Dendritic cell treated with granulocyte-macrophage colony-stimulating factor and Interleukin-4, amounts not matched to agents 40 ng/mL and 50 ng/mL, for 4 days (primary cell): ENCODE measurements at regions of chr19 and their contacts with region 1.

Region 1: DNA sequence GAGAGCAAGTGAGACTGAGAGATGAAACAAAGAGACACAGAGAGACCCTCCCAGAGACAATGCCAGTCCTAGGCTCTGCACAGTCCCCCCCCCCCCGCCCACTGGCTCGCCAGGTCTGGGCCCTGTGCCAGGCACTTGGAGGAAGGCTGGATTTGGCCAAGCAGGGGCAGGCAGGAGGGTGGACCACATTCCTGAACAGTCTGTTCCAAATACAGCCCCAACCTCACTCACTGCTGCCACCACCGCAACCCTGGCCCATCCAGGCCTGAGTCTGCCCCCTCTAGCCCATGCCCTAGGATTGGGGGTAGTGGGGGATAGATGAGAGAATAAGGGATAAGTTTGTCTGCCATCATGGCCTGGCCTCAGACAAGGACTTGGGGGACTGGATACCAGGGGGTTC is 19.0 kb downstream of the CYP2F1 start:
- H3K4me3 Mint-ChIP-seq: no peak overlapping the region
- H3K27ac Mint-ChIP-seq: no peak overlapping the region
- H3K4me1 Mint-ChIP-seq: peaks cover 17% of the 10 kb centered on the region
- H3K27me3 Mint-ChIP-seq: peaks cover 51% of the 10 kb centered on the region

Region 2: DNA sequence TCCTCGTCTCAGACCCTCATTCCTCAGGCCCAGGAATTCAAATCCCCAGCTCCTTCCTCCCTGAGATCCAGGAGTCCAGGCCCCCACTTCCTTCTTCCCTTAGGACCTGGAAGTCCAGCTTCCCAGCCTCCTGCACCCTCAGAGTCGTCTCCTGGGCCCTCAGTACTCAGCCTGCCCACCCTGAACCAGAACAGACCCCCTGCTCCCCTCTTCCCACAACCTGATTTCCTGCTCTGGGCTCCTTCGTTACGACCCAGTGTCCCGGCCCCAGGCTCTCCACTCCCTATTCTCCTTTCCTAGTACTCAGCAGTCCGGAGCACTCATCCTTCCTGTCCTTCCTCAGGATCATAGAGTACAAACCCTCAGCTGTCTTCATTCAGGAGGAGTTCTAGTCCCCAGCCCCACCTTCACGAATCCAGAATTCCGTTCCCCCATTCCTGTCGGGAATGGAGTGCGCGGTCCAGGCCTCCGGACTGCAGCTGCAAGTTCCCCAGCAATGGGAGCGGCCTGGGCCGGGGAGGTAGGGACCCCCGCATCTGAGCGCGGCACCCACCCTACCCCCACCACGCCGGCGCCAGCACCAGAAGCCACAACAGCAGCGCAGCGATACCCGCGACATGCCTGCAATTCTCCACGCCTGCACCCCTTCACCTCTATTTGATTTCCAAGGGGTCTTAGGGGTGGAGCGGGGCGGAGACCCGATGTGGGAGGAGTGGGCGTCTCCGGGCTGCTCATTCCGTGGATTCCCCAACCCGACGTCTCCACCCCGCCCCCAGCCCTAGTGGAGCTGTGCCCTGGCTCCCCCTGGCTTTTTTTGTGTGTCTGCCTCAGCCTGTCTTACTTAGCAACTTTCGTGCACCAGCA is 321.6 kb before region 1 on chr19:
- intact Hi-C with region 1: loop called (anchors 5 kb)
- H3K4me3 Mint-ChIP-seq: peak overlapping the region; percentile 85
- H3K27ac Mint-ChIP-seq: peak overlapping the region; percentile 87
- H3K4me1 Mint-ChIP-seq: peaks cover 62% of the 10 kb centered on the region
- H3K27me3 Mint-ChIP-seq: peaks cover 40% of the 10 kb centered on the region